H1 (cell line): ENCODE measurements at regions of chr17 and their contacts with region 1.

Region 1: DNA sequence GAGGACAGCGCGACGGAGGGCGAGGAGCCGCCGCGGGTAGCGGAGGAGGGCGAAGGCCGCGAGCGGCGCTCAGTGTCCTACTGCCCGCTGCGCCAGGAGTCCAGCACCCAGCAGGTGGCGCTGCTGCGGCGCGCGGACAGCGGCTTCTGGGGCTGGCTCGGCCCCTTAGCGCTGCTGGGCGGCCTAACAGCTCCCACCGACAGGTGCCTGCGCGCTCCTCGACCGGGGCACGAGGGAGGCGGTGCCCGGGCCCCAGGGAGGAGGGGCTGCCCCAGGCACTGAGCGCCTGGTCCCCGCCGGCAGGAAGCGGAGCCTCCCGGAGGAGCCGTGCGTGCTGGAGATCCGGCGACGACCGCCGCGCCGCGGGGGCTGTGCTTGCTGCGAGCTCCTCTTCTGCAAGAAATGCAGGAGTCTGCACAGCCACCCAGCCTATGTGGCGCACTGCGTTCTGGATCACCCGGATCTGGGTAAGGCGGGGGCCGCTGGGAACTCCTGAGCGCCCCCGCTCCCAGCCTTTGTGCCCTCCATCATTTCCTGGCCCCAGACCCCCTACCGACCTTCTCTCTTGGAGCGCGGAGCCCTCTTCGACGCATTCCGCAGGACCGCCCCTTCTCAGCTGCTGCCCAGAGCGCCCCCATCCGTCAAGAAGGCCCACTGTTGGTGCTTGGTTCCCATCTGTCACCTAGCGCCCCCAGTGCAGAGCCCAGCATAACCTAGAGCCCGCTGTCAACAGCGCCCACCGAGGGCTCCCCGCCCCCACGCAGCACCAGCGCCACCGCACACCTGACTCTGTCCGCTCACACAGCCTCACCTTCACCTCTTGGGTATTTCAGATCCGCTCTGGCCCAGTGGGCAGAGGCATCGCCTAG is 3.7 kb downstream of the C17orf50 start:
- DNase-seq: peak; percentile 90 to 96
- H3K4me3 ChIP-seq: peak overlapping the region; percentile 16 to 62 (median 50); a peak in 7 of 8 replicates
- H3K27ac ChIP-seq: no peak overlapping the region
- H3K4me1 ChIP-seq: peaks cover 0 to 12% (median 7%) of the 10 kb centered on the region in 4 experiments; a peak in 5 of 7 replicates
- H3K27me3 ChIP-seq: peaks cover 0 to 3% (median 2%) of the 10 kb centered on the region in 4 experiments; a peak in 3 of 7 replicates
- CTCF ChIP-seq: peak; percentile 96 to 99 (median 97)
- EP300 ChIP-seq: peak in 1 of 2 experiments; percentile 59; a peak in 1 of 3 replicates
- POLR2A ChIP-seq: peak in 1 of 2 experiments; percentile 34; a peak in 1 of 3 replicates
- RAD21 ChIP-seq: peak; percentile 75 to 86

Region 2: GRCh38 chr17:35731239-35731931 is 33.0 kb before region 1 on chr17 and contains the start of gene RASL10B:
- CTCF ChIA-PET with region 1: interaction called, 14 read pairs
- POLR2A ChIA-PET with region 1: interaction called, 3 read pairs
- DNase-seq: peak in 1 of 2 experiments; percentile 85
- H3K4me3 ChIP-seq: peak within 1 kb of the TSS; percentile 67 to 85 (median 78)
- H3K27ac ChIP-seq: no peak within 1 kb of the TSS
- H3K4me1 ChIP-seq: peaks cover 7 to 26% (median 8%) of the 10 kb centered on the region in 4 experiments; a peak in 6 of 7 replicates
- H3K27me3 ChIP-seq: peaks cover 0 to 8% (median 5%) of the 10 kb centered on the region in 4 experiments; a peak in 4 of 7 replicates
- CTCF ChIP-seq: no peak
- EP300 ChIP-seq: no peak
- POLR2A ChIP-seq: no peak
- RAD21 ChIP-seq: no peak; a peak in 1 of 4 replicates
- total RNA-seq, gene RASL10B: 21.6 and 22.8 TPM in 2 replicates

Region 3: GRCh38 chr17:35740997-35741931 is 23.1 kb before region 1 on chr17:
- CTCF ChIA-PET with region 1: interaction called, 14 read pairs
- POLR2A ChIA-PET with region 1: interaction called, 4 read pairs
- DNase-seq: peak in 1 of 2 experiments; percentile 79
- H3K4me3 ChIP-seq: peak overlapping the region; percentile 9 to 56 (median 32)
- H3K27ac ChIP-seq: no peak overlapping the region
- H3K4me1 ChIP-seq: peaks cover 0 to 9% (median 0%) of the 10 kb centered on the region in 4 experiments; a peak in 4 of 7 replicates
- H3K27me3 ChIP-seq: peaks cover 11 to 39% (median 34%) of the 10 kb centered on the region in 4 experiments
- CTCF ChIP-seq: peak in 2 of 3 experiments; percentile 23 to 25; a peak in 3 of 4 replicates
- EP300 ChIP-seq: no peak
- POLR2A ChIP-seq: 0 out of 3 replicates have a peak, but pooled peaks of 1 of the 2 experiments have one; percentile 6
- RAD21 ChIP-seq: peak; percentile 2 to 3; a peak in 2 of 4 replicates

Region 4: GRCh38 chr17:35788504-35789368 is 24.4 kb after region 1 on chr17:
- CTCF ChIA-PET with region 1: interaction called, 247 read pairs
- POLR2A ChIA-PET with region 1: interaction called, 3 read pairs
- DNase-seq: no peak
- H3K4me3 ChIP-seq: no peak overlapping the region
- H3K27ac ChIP-seq: no peak overlapping the region
- H3K4me1 ChIP-seq: 0 out of 7 replicates have a peak, but pooled peaks cover 0 to 2% (median 0%) of the 10 kb centered on the region in 4 experiments
- H3K27me3 ChIP-seq: peaks cover 6 to 12% (median 10%) of the 10 kb centered on the region in 4 experiments
- CTCF ChIP-seq: no peak
- EP300 ChIP-seq: no peak
- POLR2A ChIP-seq: no peak
- RAD21 ChIP-seq: no peak

Region 5: DNA sequence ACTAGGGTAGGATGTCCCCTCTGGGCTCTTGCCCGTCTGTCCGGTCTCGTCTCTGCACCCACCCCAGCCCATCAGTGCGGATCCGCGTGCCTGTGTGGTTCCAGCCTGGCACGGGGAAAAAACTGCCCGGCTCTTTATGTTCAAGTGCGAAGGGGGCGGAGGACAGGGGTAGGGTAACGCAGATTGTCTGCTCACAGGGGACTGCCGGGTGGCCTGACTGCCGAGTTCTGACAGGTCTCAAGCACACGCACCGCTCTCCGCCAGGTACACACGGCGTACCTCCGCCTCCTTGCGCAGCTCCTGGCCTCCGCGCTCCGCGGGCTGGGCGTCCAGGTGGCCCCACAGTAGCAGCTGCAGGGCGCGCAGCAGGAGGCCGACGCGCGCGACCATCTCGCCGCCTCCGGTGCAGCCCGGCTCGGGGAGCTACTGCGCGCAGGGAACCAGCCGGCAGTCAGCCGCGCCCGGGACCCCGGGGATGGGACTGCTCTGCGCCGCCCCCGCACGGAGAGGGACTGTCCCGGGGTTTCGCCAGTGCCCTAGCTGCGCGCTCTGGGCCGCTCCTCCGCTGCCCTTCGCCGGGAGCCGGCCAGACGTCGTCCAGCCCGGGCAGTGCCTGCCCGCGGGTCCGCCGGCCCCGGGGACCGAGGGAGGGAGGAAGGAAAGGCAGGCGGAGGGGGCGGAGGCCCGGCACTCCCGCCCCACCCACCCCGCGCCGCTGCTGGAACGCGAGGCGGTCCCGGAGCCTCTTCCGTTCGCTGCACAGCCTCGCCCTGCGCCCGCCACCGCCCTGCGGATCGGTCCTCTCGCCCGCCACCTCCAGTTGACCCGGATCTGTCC is 30.8 kb after region 1 on chr17 and contains the start of gene MMP28:
- CTCF ChIA-PET with region 1: interaction called, 179 read pairs
- POLR2A ChIA-PET with region 1: no interaction called
- DNase-seq: peak in 1 of 2 experiments; percentile 81
- H3K4me3 ChIP-seq: peak within 1 kb of the TSS; percentile 27 to 66 (median 60)
- H3K27ac ChIP-seq: no peak within 1 kb of the TSS
- H3K4me1 ChIP-seq: peaks cover 0 to 10% (median 5%) of the 10 kb centered on the region in 4 experiments; a peak in 5 of 7 replicates
- H3K27me3 ChIP-seq: peaks cover 23 to 54% (median 43%) of the 10 kb centered on the region in 4 experiments
- CTCF ChIP-seq: no peak
- EP300 ChIP-seq: no peak
- POLR2A ChIP-seq: no peak
- RAD21 ChIP-seq: no peak
- total RNA-seq, gene MMP28: not detected in 2 replicates